ENCODE measurements at regions of chr1 and their contacts with region 1.

Region 1: DNA sequence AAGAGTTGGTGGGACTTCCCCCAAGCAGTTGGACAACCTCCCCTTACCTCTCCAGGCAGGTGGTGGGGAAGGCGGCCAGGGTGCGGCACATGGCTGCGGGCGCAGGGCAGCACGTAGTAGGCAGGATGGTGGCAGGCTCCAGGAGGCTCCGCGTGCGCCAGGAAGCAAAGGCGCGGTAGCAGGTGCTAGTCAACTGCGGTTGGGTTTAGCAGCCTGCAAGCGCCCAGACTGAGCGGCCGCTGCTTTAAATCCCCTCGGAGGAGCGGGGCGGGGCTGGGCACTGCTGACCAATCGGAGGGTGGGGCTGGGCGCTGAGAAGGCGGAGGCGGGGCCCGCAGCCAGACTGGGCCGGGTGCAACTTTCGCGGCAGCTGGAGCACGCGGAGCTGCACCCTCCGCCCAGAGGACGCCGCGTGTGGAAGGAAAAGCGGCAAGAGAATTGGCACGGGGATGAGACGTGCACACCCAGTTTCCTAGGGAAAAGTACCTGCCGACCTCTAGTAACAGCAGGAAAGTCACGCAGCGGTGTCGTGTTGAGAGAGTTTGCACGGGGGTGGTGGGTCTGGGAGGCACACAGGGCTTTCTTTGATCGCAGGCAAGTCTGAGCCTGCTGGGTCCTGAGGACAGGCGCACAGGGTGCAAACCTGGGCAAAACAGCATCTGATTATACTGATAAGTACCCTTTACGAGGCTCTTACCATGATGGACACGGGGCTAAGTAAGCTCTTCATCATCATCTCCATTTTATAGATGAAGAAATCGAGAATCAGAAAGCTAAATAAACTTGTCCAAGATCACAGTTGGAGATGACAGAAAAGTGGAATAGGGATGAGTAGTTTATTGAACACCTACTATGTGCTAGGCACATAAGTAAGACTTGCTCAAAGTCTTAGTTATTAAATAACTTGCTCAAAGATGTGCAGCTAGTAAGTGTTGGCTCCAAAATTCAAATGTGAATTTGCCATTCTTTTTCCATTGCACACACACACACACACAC is at the start of gene RGS16:
- DNase-seq: peak; percentile 84
- ATAC-seq: peak; percentile 95
- H3K4me3 ChIP-seq: peak within 1 kb of the TSS; percentile 82 to 83
- H3K27ac ChIP-seq: no peak within 1 kb of the TSS; the same call in 1 of the 2 replicates
- H3K4me1 ChIP-seq: peaks cover 0 to 21% of the 10 kb centered on the region in 2 experiments; a peak in 3 of 4 replicates
- H3K27me3 ChIP-seq: no peaks in the 10 kb centered on the region
- CTCF ChIP-seq: no peak
- POLR2A ChIP-seq: peak; percentile 98
- RAD21 ChIP-seq: no peak
- total RNA-seq, gene RGS16: 6.5 TPM

Region 2: DNA sequence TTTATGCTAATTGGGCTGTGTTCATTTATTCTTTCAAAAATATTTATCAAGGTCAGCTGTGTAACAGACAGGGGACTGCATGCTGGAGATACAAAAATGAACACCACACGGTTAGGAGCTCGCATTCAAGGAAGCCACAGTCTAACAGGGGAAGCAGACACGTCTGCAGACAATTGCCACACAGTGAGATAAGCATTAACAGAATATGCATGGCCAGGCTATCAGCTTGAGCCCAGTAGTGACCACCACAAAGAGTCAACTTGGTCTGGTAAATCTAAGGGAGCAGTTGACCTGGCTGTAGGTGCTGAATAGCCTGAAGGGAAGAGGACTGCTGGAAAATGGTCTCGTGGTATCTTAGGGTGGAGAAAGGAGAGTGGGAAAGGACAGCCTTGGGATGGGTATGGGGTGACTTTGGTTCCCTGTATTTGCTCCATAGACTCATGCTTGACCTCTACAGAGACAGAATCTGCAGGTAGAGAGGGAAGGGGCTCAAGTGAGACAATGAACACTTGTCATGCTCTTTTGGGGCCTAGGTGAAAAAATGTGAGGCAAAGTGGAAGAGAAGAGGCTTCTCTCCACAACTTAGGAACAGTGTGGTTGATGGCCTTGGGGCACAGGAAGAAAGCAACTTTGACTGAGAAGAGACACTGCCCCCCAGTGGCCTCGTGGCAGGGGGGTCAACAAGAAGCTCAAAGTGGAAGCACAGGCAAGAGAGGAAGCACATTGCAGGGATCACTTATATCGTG is 177.5 kb after region 1 on chr1:
- CTCF ChIA-PET with region 1: interaction called, 412 read pairs
- POLR2A ChIA-PET with region 1: interaction called, 39 read pairs
- RAD21 ChIA-PET with region 1: interaction called, 11 to 13 read pairs
- intact Hi-C with region 1: loop called (anchors 1 kb)
- DNase-seq: peak; percentile 48
- ATAC-seq: peak; percentile 81
- H3K4me3 ChIP-seq: no peak overlapping the region
- H3K27ac ChIP-seq: no peak overlapping the region
- H3K4me1 ChIP-seq: no peaks in the 10 kb centered on the region
- H3K27me3 ChIP-seq: no peaks in the 10 kb centered on the region
- CTCF ChIP-seq: peak; percentile 78 to 82 (median 80)
- POLR2A ChIP-seq: no peak
- RAD21 ChIP-seq: peak; percentile 90

Region 3: GRCh38 chr1:182789138-182790076 is 184.9 kb after region 1 on chr1 and contains the start of gene NPL:
- CTCF ChIA-PET with region 1: interaction called, 412 read pairs
- POLR2A ChIA-PET with region 1: interaction called, 39 read pairs
- RAD21 ChIA-PET with region 1: interaction called, 3 to 8 read pairs
- intact Hi-C with region 1: loop called (anchors 1 kb)
- DNase-seq: no peak
- ATAC-seq: peak; percentile 54
- H3K4me3 ChIP-seq: no peak within 1 kb of the TSS
- H3K27ac ChIP-seq: no peak within 1 kb of the TSS
- H3K4me1 ChIP-seq: no peaks in the 10 kb centered on the region
- H3K27me3 ChIP-seq: peaks cover 10% of the 10 kb centered on the region
- CTCF ChIP-seq: no peak
- POLR2A ChIP-seq: no peak
- RAD21 ChIP-seq: no peak
- total RNA-seq, gene NPL: 0.39 TPM

Measured in HCT116 (cell line).